ENCODE measurements at regions of chr11 and their contacts with region 1.

Region 1: GRCh38 chr11:61803889-61804647 is 11.4 kb downstream of the FEN1 start:
- DNase-seq: no peak
- ATAC-seq: no peak
- H3K4me3 ChIP-seq: no peak overlapping the region
- H3K27ac ChIP-seq: no peak overlapping the region
- H3K4me1 ChIP-seq: no peaks in the 10 kb centered on the region
- H3K27me3 ChIP-seq: no peaks in the 10 kb centered on the region
- CTCF ChIP-seq: no peak

Region 2: DNA sequence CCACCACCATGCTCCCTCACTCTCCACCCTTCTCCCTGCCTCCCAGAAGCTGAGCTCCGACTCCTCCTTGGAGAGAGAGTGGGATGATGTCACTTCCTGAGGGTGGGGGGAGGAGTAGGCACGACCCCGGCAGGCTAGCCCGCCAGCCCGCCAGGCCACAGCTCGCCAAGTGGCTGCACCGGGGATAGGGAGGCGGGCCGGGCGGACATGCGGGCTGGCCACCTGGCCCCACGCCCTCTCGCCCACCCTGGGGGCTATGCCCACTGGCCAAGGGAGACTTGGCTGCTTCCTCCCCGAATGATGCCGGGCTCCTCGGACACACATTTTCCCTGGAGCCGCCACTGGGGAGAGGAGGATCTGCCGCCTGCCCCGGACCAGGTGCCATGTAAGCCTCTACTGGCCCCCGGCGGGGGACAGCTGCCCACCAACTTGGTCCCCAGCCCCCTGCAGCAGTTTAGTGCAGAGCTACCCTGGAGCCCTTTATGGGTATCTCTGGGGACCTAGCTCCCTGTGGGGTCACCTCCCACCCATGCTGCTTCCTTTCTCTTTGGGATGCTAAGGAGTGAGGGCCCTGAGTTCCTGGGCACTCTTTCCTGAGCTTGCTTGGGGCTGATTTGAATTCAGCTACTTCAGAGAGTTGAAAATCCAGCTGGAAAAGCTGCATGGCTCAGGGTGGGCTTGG is 85.3 kb before region 1 on chr11:
- intact Hi-C with region 1: no loop called
- DNase-seq: peak in 1 of 6 donors; percentile 77
- ATAC-seq: peak in 3 of 4 donors; percentile 17 to 37 (median 29)
- H3K4me3 ChIP-seq: no peak overlapping the region
- H3K27ac ChIP-seq: no peak overlapping the region
- H3K4me1 ChIP-seq: no peaks in the 10 kb centered on the region
- H3K27me3 ChIP-seq: no peaks in the 10 kb centered on the region
- CTCF ChIP-seq: no peak

Region 3: GRCh38 chr11:61860054-61860903 is 56.2 kb after region 1 on chr11:
- intact Hi-C with region 1: no loop called
- DNase-seq: peak; percentile 76 to 90 (median 84)
- ATAC-seq: peak; percentile 86 to 97 (median 90)
- H3K4me3 ChIP-seq: no peak overlapping the region
- H3K27ac ChIP-seq: no peak overlapping the region
- H3K4me1 ChIP-seq: no peaks in the 10 kb centered on the region
- H3K27me3 ChIP-seq: no peaks in the 10 kb centered on the region
- CTCF ChIP-seq: no peak

Region 4: GRCh38 chr11:61899146-61899841 is 95.2 kb after region 1 on chr11:
- intact Hi-C with region 1: loop called in 1 of 3 experiments (anchors 10 kb)
- DNase-seq: peak; percentile 66 to 98 (median 87)
- ATAC-seq: peak; percentile 80 to 91 (median 89)
- H3K4me3 ChIP-seq: no peak overlapping the region
- H3K27ac ChIP-seq: no peak overlapping the region
- H3K4me1 ChIP-seq: no peaks in the 10 kb centered on the region
- H3K27me3 ChIP-seq: no peaks in the 10 kb centered on the region
- CTCF ChIP-seq: peak; percentile 100

Region 5: DNA sequence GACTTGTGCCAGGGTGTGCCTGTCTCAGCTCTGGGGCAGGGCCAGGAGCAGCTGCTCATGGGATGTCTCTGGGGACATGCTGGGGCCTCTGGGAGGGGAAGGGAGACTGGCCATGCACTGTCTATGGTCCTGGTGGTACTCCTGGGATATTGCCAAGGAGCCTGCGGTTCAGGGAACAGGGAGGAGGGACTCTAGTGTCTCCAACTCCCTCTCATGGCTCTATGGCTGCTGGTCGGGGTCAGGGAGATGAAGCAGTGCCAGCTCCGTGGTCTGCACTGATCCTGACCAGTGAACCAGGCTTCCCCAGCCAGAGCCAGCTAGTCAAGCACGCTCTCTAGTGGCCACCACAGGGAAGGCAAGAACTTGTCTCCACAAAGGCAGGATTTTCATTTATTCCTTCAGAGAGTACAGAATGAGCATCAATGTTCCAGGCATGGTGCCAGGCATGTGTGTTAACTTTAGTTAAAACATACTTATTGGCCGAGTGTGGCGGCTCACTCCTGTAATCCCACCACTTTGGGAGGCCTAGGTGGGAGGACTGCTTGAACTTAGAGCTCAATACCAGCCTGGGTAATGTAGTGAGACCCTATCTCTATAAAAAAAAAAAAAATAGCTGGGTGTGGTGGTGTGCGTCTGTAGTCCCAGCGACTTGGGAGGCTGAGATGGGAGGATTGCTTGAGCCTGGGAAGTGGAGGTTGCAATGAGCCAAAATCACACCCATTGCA is 143.6 kb after region 1 on chr11:
- intact Hi-C with region 1: loop called in 2 of 3 experiments (anchors 10 kb)
- DNase-seq: peak; percentile 75 to 91 (median 86)
- ATAC-seq: peak; percentile 67 to 90 (median 85)
- H3K4me3 ChIP-seq: no peak overlapping the region
- H3K27ac ChIP-seq: no peak overlapping the region
- H3K4me1 ChIP-seq: peaks cover 11 to 18% (median 17%) of the 10 kb centered on the region in 3 donors
- H3K27me3 ChIP-seq: no peaks in the 10 kb centered on the region
- CTCF ChIP-seq: peak; percentile 73 to 76 (median 74)

Region 6: DNA sequence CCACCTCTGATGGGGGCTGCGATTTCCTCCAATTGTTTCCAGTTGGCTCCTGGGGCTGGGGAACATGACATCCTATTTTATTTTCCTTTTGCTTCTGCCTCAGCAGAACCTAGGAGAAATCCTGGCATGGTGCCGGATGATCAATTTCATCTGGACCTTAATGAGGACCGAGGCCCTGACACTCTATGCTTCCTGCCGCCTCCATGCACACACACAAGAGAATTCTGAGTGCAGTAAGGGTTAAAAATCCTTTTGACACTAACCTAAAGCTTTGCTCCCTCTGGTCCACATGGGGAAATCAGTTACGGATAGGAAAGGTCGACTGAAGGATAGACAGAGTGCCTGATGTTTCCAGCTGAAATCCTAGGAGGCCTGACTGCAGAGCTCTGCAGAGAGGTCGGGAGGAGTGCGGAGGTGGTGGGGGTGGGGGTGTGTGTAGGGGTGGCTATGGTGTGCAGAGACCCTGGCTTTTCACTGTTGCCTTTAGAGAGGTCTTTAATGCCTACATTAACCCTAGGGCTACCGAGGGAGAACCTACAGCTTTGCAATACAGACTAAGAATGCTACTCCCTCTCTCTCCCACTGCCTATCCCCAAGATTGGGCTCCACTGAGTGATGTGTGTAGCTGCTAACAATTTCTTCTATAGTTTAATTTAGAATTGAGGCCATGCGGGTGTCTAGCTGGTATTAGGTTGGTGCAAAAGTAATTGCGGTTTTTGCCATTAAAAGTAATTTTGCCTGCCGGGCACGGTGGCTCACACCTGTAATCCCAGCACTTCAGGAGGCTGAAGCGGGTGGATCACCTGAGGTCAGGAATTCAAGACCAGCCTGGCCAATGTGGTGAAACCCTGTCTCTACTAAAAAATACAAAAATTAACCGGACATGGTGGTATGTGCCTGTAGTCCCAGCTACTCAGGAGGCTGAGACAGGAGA is 266.2 kb after region 1 on chr11:
- intact Hi-C with region 1: no loop called
- DNase-seq: no peak
- ATAC-seq: peak in 2 of 4 donors; percentile 25 to 45
- H3K4me3 ChIP-seq: no peak overlapping the region
- H3K27ac ChIP-seq: no peak overlapping the region
- H3K4me1 ChIP-seq: no peaks in the 10 kb centered on the region
- H3K27me3 ChIP-seq: no peaks in the 10 kb centered on the region
- CTCF ChIP-seq: no peak

Region 7: DNA sequence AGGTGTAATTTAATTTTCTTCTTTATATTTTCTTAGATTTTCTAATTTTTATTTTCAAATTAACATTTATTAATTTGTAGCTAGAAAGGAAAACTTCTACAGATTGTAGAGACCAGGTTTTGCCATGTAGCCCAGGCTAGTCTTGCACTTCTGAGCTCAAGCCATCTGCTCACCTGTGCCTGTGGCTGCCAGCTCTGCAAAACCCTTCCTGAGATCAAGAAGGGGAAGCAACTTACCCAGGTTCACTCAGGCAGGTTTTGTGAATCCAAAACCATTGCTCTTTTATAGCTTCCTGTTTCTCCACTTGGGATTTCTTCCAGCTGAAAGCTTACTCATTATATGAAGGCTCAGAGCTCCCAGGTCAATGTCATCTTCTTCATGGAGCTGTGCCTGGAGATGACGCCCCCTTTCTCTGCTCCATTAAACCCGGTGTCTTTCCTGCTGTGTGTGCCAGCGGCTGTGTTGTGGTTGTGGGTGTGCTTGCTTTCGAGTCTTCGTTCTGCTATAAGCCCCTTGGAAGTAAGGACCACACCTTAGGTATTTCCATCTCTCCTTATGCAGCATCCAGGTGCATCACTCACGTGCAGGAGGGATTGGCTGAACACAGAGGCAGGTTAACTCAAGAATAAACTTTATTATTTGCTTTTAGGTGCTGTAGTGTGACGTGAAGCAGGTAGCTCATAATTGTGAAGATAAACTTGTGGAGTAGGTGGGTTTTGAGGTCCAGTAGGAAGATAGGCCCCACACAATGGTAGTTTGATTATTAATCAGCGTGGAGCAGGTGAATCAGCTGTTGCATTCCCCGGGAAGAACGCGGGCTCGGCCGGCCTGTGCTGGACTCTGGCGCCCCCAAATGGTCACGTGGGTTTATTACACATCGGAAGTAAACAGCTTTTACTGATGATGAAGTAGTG is 277.6 kb after region 1 on chr11:
- intact Hi-C with region 1: loop called in 1 of 3 experiments (anchors 10 kb)
- DNase-seq: peak; percentile 66 to 92 (median 84)
- ATAC-seq: peak; percentile 93 to 100 (median 98)
- H3K4me3 ChIP-seq: no peak overlapping the region
- H3K27ac ChIP-seq: no peak overlapping the region
- H3K4me1 ChIP-seq: no peaks in the 10 kb centered on the region
- H3K27me3 ChIP-seq: no peaks in the 10 kb centered on the region
- CTCF ChIP-seq: peak; percentile 73 to 87 (median 77)

Region 8: GRCh38 chr11:62108017-62108750 is 304.1 kb after region 1 on chr11:
- intact Hi-C with region 1: loop called in 2 of 3 experiments (anchors 5 to 10 kb)
- DNase-seq: peak in 3 of 6 donors; percentile 29 to 39 (median 38)
- ATAC-seq: peak; percentile 35 to 80 (median 70)
- H3K4me3 ChIP-seq: no peak overlapping the region
- H3K27ac ChIP-seq: no peak overlapping the region
- H3K4me1 ChIP-seq: peaks cover 0 to 5% (median 0%) of the 10 kb centered on the region in 3 donors
- H3K27me3 ChIP-seq: no peaks in the 10 kb centered on the region
- CTCF ChIP-seq: peak; percentile 68 to 71 (median 69)

Region 9: DNA sequence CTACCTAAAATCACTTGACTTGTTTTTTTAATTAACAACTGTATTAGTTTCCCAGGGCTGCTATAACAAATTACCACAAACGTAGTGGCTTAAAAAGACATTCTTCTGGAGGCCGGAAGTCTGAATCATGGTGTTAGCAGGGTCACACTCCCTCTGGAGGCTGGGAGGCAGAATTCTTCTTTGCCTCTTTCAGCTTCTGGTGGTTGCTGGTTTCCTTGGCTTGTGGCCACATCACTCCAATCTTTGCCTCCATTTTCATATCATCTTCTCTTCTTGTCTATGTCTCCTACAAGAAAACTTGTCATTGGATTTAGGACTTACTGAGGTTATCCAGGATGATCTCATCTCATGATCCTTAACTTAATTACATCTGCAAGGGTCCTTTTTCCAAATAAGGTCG is 312.4 kb after region 1 on chr11:
- intact Hi-C with region 1: loop called in 1 of 3 experiments (anchors 10 kb)
- DNase-seq: no peak
- ATAC-seq: no peak
- H3K4me3 ChIP-seq: no peak overlapping the region
- H3K27ac ChIP-seq: no peak overlapping the region
- H3K4me1 ChIP-seq: no peaks in the 10 kb centered on the region
- H3K27me3 ChIP-seq: no peaks in the 10 kb centered on the region
- CTCF ChIP-seq: no peak

Region 10: DNA sequence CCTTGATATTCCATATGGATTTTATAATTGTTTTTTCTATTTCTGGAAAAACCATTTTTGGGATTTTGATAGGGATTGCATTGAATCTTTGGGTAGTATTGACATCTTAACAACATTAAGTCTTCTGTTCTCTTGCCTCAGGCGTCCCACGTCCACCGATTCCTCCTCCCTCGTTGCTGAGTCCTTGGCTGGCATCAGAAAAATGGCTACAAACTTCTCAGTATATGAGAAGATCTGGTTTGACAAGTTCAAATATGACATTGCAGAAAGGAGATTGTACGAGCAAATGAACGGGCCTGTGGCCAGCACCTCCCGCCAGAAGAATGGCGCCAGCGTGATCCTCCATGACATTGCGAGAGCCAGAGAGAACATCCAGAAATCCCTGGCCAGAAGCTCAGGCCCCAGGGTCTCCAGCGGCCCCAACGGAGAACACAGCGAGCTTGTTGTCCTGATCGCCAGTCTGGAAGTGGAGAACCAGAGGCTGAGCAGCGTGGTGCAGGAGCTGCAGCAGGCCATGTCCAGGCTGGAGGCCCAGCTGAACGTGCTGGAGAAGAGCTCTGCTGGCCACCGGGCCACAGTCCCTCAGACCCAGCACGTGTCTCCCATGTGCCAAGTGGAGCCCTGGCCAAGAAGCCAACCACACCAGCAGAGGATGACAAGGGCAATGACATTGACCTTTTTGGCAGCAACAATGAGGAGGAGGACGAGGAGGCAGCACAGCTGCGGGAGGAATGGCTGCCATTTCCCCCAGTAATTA is 365.2 kb after region 1 on chr11:
- intact Hi-C with region 1: no loop called
- DNase-seq: no peak
- ATAC-seq: no peak
- H3K4me3 ChIP-seq: no peak overlapping the region
- H3K27ac ChIP-seq: no peak overlapping the region
- H3K4me1 ChIP-seq: no peaks in the 10 kb centered on the region
- H3K27me3 ChIP-seq: no peaks in the 10 kb centered on the region
- CTCF ChIP-seq: no peak